Dendritic cell treated with granulocyte-macrophage colony-stimulating factor and Interleukin-4, amounts not matched to agents 40 ng/mL and 50 ng/mL, for 4 days (primary cell): ENCODE measurements at regions of chr16 and their contacts with region 1.

Region 1: DNA sequence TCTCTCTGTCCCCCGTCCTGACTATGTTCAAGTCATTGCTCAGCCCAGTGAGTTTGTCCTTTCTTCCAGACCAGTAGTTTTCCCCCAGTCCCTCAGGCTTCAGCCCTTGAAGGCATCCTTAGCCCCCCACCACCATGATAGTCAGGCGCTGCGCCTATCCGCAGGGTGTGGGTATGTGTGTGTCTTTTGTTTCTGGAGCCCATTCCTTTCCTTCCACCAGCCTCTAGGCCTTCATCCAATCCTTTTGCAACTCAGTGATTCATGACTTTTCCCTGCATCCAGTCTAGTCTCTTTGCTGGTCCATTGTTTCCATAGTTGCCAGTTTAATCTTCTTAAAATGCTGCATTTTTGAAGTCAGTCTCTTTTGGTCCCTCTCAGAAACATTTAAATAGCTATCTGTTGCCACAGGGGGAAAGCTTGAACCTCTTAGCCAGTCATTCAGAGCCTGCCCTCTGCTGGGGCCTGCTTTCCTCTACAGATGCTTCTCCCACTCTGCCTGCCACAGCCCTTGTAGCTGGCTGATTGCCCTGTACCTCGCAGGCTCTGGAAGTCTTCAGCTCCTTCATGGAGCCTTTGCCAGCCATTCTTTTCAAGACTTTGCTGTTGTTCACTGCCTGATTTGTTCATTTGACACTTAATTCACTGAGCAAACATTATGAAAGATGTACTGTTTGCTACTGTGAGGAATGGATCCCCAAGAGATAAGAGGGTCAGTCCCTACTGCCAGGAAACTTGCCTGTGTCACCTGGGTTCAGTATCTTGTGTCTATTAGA is 55.9 kb upstream of the ADCY7 start:
- H3K4me3 Mint-ChIP-seq: no peak overlapping the region
- H3K27ac Mint-ChIP-seq: peak overlapping the region; percentile 71
- H3K4me1 Mint-ChIP-seq: peaks cover 35% of the 10 kb centered on the region
- H3K27me3 Mint-ChIP-seq: no peaks in the 10 kb centered on the region

Region 2: GRCh38 chr16:50354629-50355456 is 144.4 kb after region 1 on chr16:
- intact Hi-C with region 1: loop called (anchors 2 kb)
- H3K4me3 Mint-ChIP-seq: no peak overlapping the region
- H3K27ac Mint-ChIP-seq: no peak overlapping the region
- H3K4me1 Mint-ChIP-seq: peaks cover 5% of the 10 kb centered on the region
- H3K27me3 Mint-ChIP-seq: no peaks in the 10 kb centered on the region